GM18951 (cell line): ENCODE measurements at regions of chr15 and their contacts with region 1.

Region 1: DNA sequence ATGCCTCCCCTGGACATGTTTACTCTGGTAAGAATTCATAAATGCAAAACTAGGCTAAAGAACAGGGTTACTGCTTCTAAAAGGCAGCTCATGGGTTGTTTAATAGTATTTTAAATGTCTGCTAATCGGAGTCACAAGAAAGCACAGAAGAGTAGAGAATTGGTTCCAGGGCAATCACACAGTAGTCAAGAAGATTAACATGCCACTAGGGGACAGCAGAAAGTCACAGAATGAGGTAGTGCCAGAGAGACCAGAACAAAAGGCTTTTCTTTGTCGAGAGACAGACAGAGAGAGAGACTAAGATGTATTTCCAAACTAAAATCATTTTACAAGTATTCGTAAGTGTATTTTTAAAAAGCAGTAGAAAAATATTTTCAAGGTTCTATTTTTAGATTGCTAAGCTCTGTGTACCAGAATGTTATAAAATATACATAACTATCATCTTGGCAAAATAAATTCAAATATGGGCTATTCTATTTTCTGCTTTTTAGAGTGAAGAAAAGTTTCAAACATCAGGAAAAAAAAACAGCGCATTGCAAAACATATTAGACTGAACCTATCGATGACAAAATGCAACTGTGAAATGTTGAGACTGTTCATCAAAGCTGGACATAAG is 78.3 kb upstream of the CDIN1 start:
- POLR2A ChIP-seq: no peak

Region 2: DNA sequence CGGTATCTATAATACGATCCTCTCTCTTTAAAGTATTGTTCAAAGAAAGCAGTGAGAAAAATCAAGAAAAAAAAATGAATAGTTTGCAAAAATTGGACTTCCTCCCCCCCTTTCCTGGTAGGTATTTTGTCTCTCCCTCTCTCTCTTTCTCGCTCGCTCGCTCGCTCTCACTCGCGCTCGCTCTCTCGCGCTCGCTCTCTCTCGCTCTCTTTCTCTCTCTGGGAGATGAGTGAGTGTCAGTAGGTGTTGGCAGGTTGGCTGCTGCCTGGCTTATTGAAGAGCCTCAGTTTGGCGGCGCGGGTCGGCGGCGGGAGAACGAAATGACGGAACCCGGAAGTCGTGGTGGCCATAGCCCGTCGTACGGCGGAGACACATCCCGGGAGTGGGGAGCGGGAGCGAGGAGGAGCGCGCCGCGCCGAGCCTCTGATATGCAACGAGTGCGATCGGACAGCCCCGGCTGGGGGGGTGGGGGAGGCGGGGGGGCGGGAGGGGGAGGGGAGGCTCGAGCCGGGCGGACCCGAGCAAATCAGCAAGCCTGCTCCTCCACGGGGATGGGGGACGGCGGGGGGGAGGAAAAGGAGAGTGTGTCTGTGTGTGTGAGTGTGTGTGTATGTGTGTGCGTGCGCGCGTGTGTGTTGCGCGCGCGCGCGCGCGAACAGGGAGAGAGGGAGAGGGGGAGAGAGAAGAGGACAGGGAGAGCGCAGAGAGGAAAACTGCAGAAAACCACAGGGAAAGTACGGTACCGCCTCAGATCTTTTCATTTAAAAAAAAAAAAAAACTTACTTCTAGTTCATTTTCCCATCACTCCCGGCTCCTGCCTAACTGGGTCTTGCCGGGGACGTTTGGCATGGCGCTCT is 599.2 kb after region 1 on chr15 and contains the start of gene MEIS2:
- in situ Hi-C with region 1: loop called (anchors 25 kb)
- POLR2A ChIP-seq: peak; percentile 52

Region 3: DNA sequence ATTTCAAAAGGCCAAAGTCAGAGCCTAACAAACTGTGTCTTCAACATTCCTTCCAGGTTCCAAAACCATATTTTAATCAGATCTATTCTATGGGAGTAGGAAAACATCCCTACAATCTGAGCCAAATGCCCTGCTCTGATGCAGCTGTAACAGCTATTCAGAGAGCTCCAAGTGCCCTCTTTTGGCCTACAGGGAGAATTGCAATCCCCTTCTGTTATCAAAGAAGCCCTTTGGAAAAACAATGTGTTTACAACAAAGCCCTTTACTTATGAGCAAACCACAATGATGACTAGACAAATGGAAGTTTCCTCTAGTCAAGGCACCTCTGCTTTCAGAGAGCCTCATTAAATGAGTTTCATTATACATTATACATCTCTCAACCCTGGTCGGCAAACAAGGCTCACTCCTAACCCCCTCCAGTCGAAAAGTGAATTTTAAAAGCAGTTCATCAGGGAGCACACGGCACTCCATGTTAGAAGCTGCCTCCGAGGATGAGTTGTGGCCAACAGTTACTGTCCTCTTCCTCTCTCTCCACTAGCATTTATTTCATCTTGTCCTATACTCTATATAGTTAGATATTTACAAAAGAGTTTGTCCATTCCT is 1390.7 kb after region 1 on chr15:
- in situ Hi-C with region 1: loop called (anchors 25 kb)
- POLR2A ChIP-seq: no peak